ENCODE measurements at regions of chr1 and their contacts with region 1.

Region 1: DNA sequence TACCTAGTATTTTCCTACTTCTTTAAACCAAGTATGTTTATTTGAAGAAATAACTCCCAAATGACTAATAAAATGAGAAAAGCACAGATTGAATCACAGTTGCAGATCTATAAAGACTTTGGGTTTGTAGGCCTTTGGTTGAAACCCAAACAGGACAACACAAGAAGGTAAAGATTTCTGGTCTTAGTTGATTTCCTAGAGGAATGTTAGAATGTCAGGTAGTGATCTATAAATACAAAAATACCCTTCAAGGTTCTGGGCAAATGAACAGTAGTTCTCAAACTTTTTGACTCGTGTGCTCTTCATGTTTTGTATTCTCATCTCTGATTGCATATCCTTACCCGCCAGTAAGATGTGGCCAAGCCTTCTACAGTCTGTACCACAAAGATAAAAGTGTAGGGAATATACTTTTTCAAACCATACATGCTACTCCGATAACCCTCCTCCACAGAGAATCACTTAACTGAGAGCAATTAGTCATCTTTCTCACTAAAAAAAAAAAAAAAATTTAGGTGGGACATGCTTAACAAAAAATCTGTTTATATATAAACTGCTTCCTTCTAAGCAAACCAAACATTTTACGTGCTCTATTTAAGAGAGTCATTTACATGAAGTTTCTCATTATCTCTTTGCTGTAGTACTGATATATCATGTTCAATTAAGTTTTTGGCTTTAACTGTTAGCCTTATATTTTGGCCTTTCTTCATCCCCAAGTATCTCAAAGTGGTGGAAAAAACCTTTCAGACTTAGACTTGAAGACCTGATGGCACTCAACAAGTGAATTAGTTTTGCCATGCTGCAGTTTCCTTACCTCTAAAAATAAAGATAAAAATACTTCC is 36.0 kb downstream of the CNIH4 start:
- DNase-seq: no peak
- H3K4me3 ChIP-seq: no peak overlapping the region
- H3K27ac ChIP-seq: no peak overlapping the region
- H3K4me1 ChIP-seq: peaks cover 0 to 7% of the 10 kb centered on the region in 2 donors
- H3K27me3 ChIP-seq: no peaks in the 10 kb centered on the region
- CTCF ChIP-seq: no peak
- POLR2A ChIP-seq: no peak

Region 2: GRCh38 chr1:224300314-224300713 is 92.3 kb before region 1 on chr1:
- intact Hi-C with region 1: loop called in 1 of 2 experiments (anchors 10 kb)
- DNase-seq: peak in 2 of 7 donors; percentile 4 to 27
- H3K4me3 ChIP-seq: no peak overlapping the region
- H3K27ac ChIP-seq: no peak overlapping the region
- H3K4me1 ChIP-seq: no peaks in the 10 kb centered on the region
- H3K27me3 ChIP-seq: no peaks in the 10 kb centered on the region
- CTCF ChIP-seq: no peak
- POLR2A ChIP-seq: no peak